K562 (cell line): ENCODE measurements at regions of chr7 and their contacts with region 1.

Region 1: DNA sequence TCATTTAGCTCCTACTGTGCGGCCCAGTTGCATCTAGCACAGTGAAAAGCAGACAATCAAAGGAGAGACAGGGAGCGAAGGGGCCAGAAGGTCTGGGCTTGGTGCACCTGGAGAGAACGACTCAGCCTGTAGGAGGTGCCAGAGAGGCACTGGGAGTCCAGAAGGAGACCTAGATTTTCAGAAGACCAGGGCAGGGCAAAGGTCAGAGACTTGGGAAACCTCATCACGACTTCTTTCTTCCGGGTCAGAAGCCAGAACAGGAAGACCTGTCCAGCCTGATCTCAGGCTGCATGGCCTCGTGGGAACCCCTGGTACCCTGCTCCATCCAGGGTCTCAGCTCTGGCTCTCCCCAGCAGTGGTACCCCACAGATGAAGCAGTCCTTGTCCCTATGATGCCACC is 5.2 kb downstream of the AGAP3 start:
- DNase-seq: peak; percentile 74 to 89 (median 78)
- ATAC-seq: peak; percentile 71
- H3K4me3 ChIP-seq: no peak overlapping the region
- H3K27ac ChIP-seq: no peak overlapping the region
- H3K4me1 ChIP-seq: peaks cover 21 to 54% of the 10 kb centered on the region in 2 experiments
- H3K27me3 ChIP-seq: no peaks in the 10 kb centered on the region
- CTCF ChIP-seq: peak; percentile 86 to 96 (median 88)
- EP300 ChIP-seq: no peak
- POLR2A ChIP-seq: no peak
- RAD21 ChIP-seq: peak; percentile 23 to 57; a peak in 2 of 4 replicates

Region 2: DNA sequence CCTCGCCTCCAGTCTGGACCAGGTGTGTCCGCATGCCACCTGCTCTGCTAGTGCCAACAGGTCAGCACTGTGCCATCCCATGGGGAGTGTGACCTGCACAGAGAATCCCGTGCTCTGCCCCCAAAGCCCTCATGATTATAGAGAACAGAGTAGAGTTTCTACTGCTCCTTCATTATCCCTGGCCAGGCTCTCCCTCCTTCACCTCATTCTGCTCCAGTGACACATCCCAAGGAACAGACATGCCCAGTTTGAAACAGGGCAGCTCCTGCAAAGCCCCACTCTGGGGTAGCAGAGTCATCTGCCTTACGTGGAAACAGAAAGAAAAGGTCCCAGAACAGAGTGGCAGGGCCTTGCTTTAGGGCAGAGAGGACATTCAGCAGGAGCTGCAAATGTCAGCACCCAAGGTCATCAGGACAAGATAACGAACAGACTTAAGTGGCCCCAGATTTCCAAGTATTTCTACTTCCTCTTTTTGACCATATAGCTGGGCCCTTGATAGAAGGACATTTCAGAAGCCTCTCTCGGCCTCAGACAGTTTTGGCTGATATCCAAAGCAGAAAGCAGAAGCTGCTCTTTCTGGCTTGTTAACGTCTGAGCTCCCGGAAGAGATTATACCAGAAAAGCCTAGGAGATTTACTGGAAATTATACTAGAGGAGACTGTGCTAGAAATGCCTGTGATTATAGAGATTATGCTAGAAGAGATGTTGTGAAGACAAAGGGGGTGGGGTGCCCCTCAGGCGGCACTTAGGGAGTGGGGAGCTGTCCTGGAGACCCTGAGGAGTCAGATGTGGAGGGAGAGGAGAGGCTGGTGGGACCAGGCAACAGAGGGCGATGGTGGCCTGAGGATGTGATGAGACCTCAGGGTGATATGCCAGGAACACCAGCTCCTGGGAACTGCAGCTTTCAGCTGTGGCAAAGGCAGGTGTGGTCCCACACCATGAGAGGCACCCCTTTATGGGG is 303.8 kb before region 1 on chr7:
- CTCF ChIA-PET with region 1: no interaction called
- POLR2A ChIA-PET with region 1: no interaction called
- in situ Hi-C with region 1: no loop called
- intact Hi-C with region 1: loop called (anchors 10 kb)
- DNase-seq: peak in 3 of 4 experiments; percentile 35 to 81 (median 51)
- ATAC-seq: peak; percentile 92
- H3K4me3 ChIP-seq: no peak overlapping the region
- H3K27ac ChIP-seq: no peak overlapping the region
- H3K4me1 ChIP-seq: peaks cover 10% of the 10 kb centered on the region in 2 experiments; a peak in 4 of 5 replicates
- H3K27me3 ChIP-seq: peaks cover 47 to 63% of the 10 kb centered on the region in 2 experiments; a peak in 4 of 5 replicates
- CTCF ChIP-seq: no peak
- EP300 ChIP-seq: peak; percentile 86
- POLR2A ChIP-seq: no peak
- RAD21 ChIP-seq: peak in 1 of 2 experiments; percentile 18; a peak in 2 of 4 replicates

Region 3: DNA sequence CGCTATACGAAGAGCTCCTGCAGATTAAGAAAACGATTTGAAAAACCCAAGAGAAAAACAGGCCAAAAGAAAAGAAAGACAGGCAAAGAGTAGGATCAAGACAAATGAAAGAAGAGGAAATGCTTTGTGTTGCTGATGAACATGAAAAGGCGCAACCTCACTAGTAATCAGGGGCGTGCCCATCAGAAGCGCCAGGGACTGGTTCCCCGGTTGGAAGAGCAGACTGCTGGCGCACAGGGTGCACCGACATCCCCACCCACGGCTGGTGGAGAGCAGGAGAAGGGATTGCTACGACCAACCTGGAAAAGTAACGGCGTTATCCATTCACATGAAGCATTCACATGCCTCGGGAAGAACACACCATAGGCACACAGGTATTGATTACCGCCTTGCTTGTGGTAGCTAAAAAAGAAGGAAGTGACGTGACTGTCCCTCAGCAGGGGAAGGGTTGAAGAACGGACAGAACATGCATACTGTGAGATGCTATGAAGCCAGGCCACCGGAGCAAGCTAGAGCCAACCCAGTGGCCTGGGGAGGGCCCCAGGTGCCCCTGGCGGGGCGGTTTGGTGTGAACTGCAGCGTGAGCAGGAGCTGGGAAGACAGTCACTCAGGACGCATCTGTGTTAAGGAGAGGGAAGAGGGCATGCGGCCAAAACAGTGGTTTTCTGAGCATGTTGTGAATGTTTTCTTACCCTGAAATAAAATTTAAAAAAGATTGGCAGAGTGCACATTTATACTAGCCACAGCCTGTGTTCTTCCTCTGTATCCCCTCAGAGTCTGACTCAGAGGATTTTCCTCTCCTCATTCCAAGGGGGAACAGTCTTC is 13.2 kb after region 1 on chr7:
- CTCF ChIA-PET with region 1: interaction called, 4 read pairs
- POLR2A ChIA-PET with region 1: interaction called, 31 read pairs
- in situ Hi-C with region 1: no loop called
- intact Hi-C with region 1: loop called (anchors 2 kb)
- DNase-seq: no peak
- ATAC-seq: no peak
- H3K4me3 ChIP-seq: no peak overlapping the region
- H3K27ac ChIP-seq: no peak overlapping the region
- H3K4me1 ChIP-seq: peaks cover 21 to 46% of the 10 kb centered on the region in 2 experiments
- H3K27me3 ChIP-seq: no peaks in the 10 kb centered on the region
- CTCF ChIP-seq: no peak
- EP300 ChIP-seq: no peak
- POLR2A ChIP-seq: 0 out of 2 replicates have a peak, but pooled peaks have one; percentile 13
- RAD21 ChIP-seq: no peak

Region 4: GRCh38 chr7:151157645-151158329 is 66.4 kb after region 1 on chr7:
- CTCF ChIA-PET with region 1: no interaction called
- POLR2A ChIA-PET with region 1: no interaction called
- in situ Hi-C with region 1: no loop called
- intact Hi-C with region 1: no loop called
- DNase-seq: no peak
- ATAC-seq: peak; percentile 50
- H3K4me3 ChIP-seq: no peak overlapping the region
- H3K27ac ChIP-seq: no peak overlapping the region
- H3K4me1 ChIP-seq: no peaks in the 10 kb centered on the region
- H3K27me3 ChIP-seq: peaks cover 42 to 58% of the 10 kb centered on the region in 2 experiments
- CTCF ChIP-seq: no peak
- EP300 ChIP-seq: no peak
- POLR2A ChIP-seq: no peak
- RAD21 ChIP-seq: no peak

Region 5: DNA sequence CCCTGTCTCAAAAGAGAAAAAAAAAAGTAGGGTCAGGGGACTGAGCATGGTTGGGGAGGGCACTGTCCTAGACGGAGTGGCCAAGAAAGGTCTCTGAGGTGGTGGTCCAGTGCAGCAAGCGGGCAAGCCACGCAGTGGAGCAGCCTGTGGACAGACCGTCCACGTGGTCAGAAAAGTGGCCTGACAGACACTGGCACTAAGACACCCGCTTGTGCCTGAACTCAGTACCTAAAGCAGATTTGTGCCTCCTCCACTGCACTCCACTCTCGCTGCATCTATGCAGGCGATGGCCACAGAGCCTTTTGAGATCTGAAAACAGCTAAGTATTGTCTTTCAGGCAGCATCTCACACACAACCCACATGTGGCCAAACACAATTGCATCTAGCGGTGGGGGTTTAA is 86.8 kb after region 1 on chr7:
- CTCF ChIA-PET with region 1: no interaction called
- POLR2A ChIA-PET with region 1: no interaction called
- in situ Hi-C with region 1: no loop called
- intact Hi-C with region 1: no loop called
- DNase-seq: no peak
- ATAC-seq: no peak
- H3K4me3 ChIP-seq: no peak overlapping the region
- H3K27ac ChIP-seq: no peak overlapping the region
- H3K4me1 ChIP-seq: peaks cover 0 to 19% of the 10 kb centered on the region in 2 experiments; a peak in 2 of 5 replicates
- H3K27me3 ChIP-seq: peaks cover 52 to 79% of the 10 kb centered on the region in 2 experiments
- CTCF ChIP-seq: no peak
- EP300 ChIP-seq: no peak
- POLR2A ChIP-seq: no peak
- RAD21 ChIP-seq: no peak